GM12878 (cell line): ENCODE measurements at regions of chr18 and their contacts with region 1.

Region 1: GRCh38 chr18:36534154-36534688 is 236.7 kb downstream of the FHOD3 start:
- DNase-seq: no peak
- ATAC-seq: peak; percentile 75
- H3K4me3 ChIP-seq: no peak overlapping the region
- H3K27ac ChIP-seq: no peak overlapping the region
- H3K4me1 ChIP-seq: no peaks in the 10 kb centered on the region
- H3K27me3 ChIP-seq: no peaks in the 10 kb centered on the region
- CTCF ChIP-seq: no peak
- EP300 ChIP-seq: no peak
- POLR2A ChIP-seq: no peak
- RAD21 ChIP-seq: no peak

Region 2: DNA sequence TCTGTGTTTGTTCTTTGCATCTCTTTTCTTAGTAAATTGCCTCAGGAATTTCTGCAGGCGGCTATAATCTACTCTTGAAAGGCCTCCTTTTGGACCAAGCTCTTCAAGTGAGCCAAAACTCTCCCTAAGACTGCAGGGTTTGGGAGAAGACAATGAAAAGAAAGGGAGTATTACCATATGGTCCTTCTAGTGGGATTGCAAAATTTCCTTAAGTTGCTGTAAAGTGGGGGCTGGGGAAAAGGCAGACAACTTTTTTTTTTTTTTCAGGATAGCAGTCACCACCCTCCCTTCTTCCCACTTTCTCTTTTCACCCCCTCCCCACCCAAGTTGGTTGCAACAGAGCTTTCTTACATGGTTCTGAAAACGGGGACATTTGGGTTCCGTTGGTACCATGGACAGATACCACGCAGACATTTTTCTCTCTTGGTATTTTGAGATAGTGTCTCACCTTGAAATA is 53.0 kb before region 1 on chr18:
- CTCF ChIA-PET with region 1: interaction called, 4 read pairs
- POLR2A ChIA-PET with region 1: no interaction called
- RAD21 ChIA-PET with region 1: no interaction called
- SMC1A ChIA-PET with region 1: interaction called, 4 read pairs
- in situ Hi-C with region 1: no loop called
- intact Hi-C with region 1: loop called (anchors 5 kb)
- DNase-seq: no peak
- ATAC-seq: no peak
- H3K4me3 ChIP-seq: no peak overlapping the region
- H3K27ac ChIP-seq: no peak overlapping the region
- H3K4me1 ChIP-seq: no peaks in the 10 kb centered on the region
- H3K27me3 ChIP-seq: no peaks in the 10 kb centered on the region
- CTCF ChIP-seq: no peak
- EP300 ChIP-seq: no peak
- POLR2A ChIP-seq: no peak
- RAD21 ChIP-seq: no peak

Region 3: GRCh38 chr18:36499938-36500337 is 34.3 kb before region 1 on chr18:
- CTCF ChIA-PET with region 1: no interaction called
- POLR2A ChIA-PET with region 1: no interaction called
- RAD21 ChIA-PET with region 1: no interaction called
- SMC1A ChIA-PET with region 1: interaction called, 11 read pairs
- in situ Hi-C with region 1: no loop called
- intact Hi-C with region 1: no loop called
- DNase-seq: peak; percentile 66
- ATAC-seq: peak; percentile 96
- H3K4me3 ChIP-seq: no peak overlapping the region
- H3K27ac ChIP-seq: no peak overlapping the region
- H3K4me1 ChIP-seq: peaks cover 11% of the 10 kb centered on the region
- H3K27me3 ChIP-seq: no peaks in the 10 kb centered on the region
- CTCF ChIP-seq: no peak
- EP300 ChIP-seq: peak; percentile 27 to 54; a peak in 1 of 4 replicates
- POLR2A ChIP-seq: no peak
- RAD21 ChIP-seq: no peak

Region 4: GRCh38 chr18:36511791-36512352 is 22.3 kb before region 1 on chr18:
- CTCF ChIA-PET with region 1: interaction called, 5 read pairs
- POLR2A ChIA-PET with region 1: interaction called, 5 read pairs
- RAD21 ChIA-PET with region 1: interaction called, 5 read pairs
- SMC1A ChIA-PET with region 1: interaction called, 21 read pairs
- in situ Hi-C with region 1: no loop called
- intact Hi-C with region 1: no loop called
- DNase-seq: no peak
- ATAC-seq: peak; percentile 37
- H3K4me3 ChIP-seq: no peak overlapping the region
- H3K27ac ChIP-seq: no peak overlapping the region
- H3K4me1 ChIP-seq: no peaks in the 10 kb centered on the region; the same call in 1 of the 2 replicates
- H3K27me3 ChIP-seq: no peaks in the 10 kb centered on the region
- CTCF ChIP-seq: no peak
- EP300 ChIP-seq: no peak
- POLR2A ChIP-seq: no peak
- RAD21 ChIP-seq: no peak

Region 5: GRCh38 chr18:36519358-36519757 is 14.9 kb before region 1 on chr18:
- CTCF ChIA-PET with region 1: interaction called, 4 read pairs
- POLR2A ChIA-PET with region 1: interaction called, 3 read pairs
- RAD21 ChIA-PET with region 1: interaction called, 5 read pairs
- SMC1A ChIA-PET with region 1: interaction called, 14 read pairs
- in situ Hi-C with region 1: no loop called
- intact Hi-C with region 1: no loop called
- DNase-seq: no peak
- ATAC-seq: peak; percentile 87
- H3K4me3 ChIP-seq: no peak overlapping the region
- H3K27ac ChIP-seq: no peak overlapping the region
- H3K4me1 ChIP-seq: peaks cover 4% of the 10 kb centered on the region; the same call in 1 of the 2 replicates
- H3K27me3 ChIP-seq: no peaks in the 10 kb centered on the region
- CTCF ChIP-seq: no peak
- EP300 ChIP-seq: no peak
- POLR2A ChIP-seq: no peak
- RAD21 ChIP-seq: no peak

Region 6: DNA sequence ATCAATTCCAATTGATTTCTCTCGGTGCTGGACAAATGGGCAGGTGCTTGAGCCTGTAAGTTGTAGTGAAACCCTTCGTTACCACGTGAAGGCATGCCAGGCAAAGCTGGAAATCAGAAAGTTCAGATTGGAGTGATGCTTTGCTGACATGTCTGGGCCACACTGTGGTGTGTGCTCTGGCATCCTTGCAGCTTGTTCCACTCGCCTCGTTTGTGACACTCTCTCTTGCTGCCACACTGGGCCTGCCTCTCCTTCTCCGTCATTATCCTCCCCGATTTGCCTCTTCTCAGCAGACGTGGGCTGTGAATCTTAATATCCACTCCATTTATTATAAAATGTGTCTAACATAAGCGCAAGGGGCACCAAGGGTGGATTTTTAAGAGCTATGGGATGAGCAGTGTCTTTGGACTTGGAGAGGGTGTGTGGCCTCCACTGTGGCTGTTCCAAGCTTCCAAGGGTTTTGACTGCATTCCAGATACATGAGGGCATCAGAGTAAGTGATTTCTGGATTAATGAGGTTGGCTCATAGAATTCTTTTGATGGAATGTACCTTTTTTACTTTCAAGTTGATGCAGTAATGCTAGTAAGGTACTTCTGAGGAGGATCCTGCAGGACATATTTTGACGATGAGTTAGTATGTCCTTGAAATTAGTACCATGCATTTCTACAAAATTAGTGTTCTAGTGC is 55.8 kb after region 1 on chr18:
- CTCF ChIA-PET with region 1: no interaction called
- POLR2A ChIA-PET with region 1: no interaction called
- RAD21 ChIA-PET with region 1: no interaction called
- SMC1A ChIA-PET with region 1: no interaction called
- in situ Hi-C with region 1: no loop called
- intact Hi-C with region 1: no loop called
- DNase-seq: no peak
- ATAC-seq: no peak
- H3K4me3 ChIP-seq: no peak overlapping the region
- H3K27ac ChIP-seq: no peak overlapping the region
- H3K4me1 ChIP-seq: no peaks in the 10 kb centered on the region
- H3K27me3 ChIP-seq: no peaks in the 10 kb centered on the region
- CTCF ChIP-seq: no peak
- EP300 ChIP-seq: no peak
- POLR2A ChIP-seq: no peak
- RAD21 ChIP-seq: no peak